ENCODE measurements at regions of chr1 and their contacts with region 1.

Region 1: DNA sequence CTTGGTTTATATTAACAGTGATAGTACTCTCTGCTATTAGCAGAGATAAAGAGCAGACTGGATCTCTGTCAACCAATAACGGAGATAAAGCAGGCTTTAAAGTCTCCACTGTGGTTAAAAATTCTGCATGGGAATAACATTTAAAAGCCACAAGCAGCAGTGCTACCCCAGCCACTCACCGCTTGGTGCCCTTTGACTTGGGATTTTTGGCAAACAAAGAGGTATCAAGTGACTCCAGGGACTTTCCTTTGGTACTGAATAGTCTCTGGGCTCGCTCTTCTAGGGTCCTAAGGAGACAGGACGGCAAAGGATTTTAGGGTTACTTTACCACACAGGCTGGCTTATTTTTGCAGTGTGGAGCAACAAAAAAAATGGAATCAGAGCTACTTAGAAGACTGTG is 11.3 kb downstream of the SF3A3 start:
- DNase-seq: no peak
- ATAC-seq: no peak
- H3K4me3 ChIP-seq: no peak overlapping the region
- H3K4me3 Mint-ChIP-seq: no peak overlapping the region
- H3K27ac ChIP-seq: no peak overlapping the region
- H3K27ac Mint-ChIP-seq: no peak overlapping the region
- H3K4me1 ChIP-seq: no peaks in the 10 kb centered on the region
- H3K4me1 Mint-ChIP-seq: no peaks in the 10 kb centered on the region
- H3K27me3 ChIP-seq: no peaks in the 10 kb centered on the region
- H3K27me3 Mint-ChIP-seq: no peaks in the 10 kb centered on the region
- CTCF ChIP-seq: no peak

Region 2: GRCh38 chr1:37704966-37705365 is 273.6 kb before region 1 on chr1:
- CTCF ChIA-PET with region 1: no interaction called
- POLR2A ChIA-PET with region 1: no interaction called
- intact Hi-C with region 1: loop called in 1 of 2 experiments (anchors 5 kb)
- DNase-seq: no peak
- ATAC-seq: no peak
- H3K4me3 ChIP-seq: no peak overlapping the region
- H3K4me3 Mint-ChIP-seq: no peak overlapping the region
- H3K27ac ChIP-seq: no peak overlapping the region
- H3K27ac Mint-ChIP-seq: no peak overlapping the region
- H3K4me1 ChIP-seq: no peaks in the 10 kb centered on the region
- H3K4me1 Mint-ChIP-seq: no peaks in the 10 kb centered on the region
- H3K27me3 ChIP-seq: no peaks in the 10 kb centered on the region
- H3K27me3 Mint-ChIP-seq: no peaks in the 10 kb centered on the region
- CTCF ChIP-seq: no peak

Region 3: GRCh38 chr1:37890378-37891014 is 88.0 kb before region 1 on chr1:
- CTCF ChIA-PET with region 1: no interaction called
- POLR2A ChIA-PET with region 1: no interaction called
- intact Hi-C with region 1: loop called (anchors 1 to 5 kb)
- DNase-seq: peak in 4 of 14 experiments; percentile 8 to 62 (median 58)
- ATAC-seq: peak; percentile 61
- H3K4me3 ChIP-seq: no peak overlapping the region
- H3K4me3 Mint-ChIP-seq: no peak overlapping the region
- H3K27ac ChIP-seq: no peak overlapping the region
- H3K27ac Mint-ChIP-seq: peak overlapping the region; percentile 66
- H3K4me1 ChIP-seq: no peaks in the 10 kb centered on the region
- H3K4me1 Mint-ChIP-seq: peaks cover 5% of the 10 kb centered on the region
- H3K27me3 ChIP-seq: no peaks in the 10 kb centered on the region
- H3K27me3 Mint-ChIP-seq: no peaks in the 10 kb centered on the region
- CTCF ChIP-seq: peak; percentile 68

Region 4: DNA sequence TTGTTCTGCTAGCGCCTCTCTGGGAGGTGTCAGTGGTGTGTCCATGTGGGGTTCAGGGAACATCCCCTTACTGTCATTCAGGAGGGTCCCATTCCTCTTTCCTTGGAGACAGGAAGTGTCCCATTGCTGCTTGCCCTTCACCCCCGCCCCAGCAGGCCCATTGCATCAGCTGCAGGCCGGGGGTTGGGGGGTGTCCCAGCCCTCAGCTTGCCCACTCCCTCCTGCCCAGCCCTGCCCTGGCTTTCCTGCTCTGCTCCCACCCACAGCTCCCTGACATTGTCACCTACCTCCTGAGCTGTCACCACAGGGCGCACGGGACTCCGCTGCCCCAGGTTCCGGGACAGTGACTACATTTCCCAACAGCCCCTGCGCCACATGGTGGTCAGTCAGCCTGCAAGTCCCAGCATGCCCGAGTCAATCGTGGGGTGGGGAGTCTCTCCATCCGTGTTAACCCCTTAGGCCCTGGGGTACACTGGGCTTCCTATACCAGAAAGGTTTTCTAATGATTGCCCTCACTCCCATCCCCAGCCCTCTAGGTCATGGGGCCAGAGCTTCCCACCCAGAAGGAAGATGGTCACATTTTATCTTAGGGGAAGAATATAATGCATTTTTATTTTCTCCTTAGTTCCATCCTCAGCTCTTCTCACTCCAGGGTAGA is 31.7 kb before region 1 on chr1 and contains the start of gene INPP5B:
- CTCF ChIA-PET with region 1: no interaction called
- POLR2A ChIA-PET with region 1: no interaction called
- intact Hi-C with region 1: no loop called
- DNase-seq: peak in 13 of 14 experiments; percentile 25 to 81 (median 51)
- ATAC-seq: peak; percentile 83
- H3K4me3 ChIP-seq: peak within 1 kb of the TSS; percentile 61
- H3K4me3 Mint-ChIP-seq: peak within 1 kb of the TSS; percentile 89
- H3K27ac ChIP-seq: peak within 1 kb of the TSS; percentile 15 to 19
- H3K27ac Mint-ChIP-seq: peak within 1 kb of the TSS; percentile 70
- H3K4me1 ChIP-seq: peaks cover 19% of the 10 kb centered on the region
- H3K4me1 Mint-ChIP-seq: peaks cover 16% of the 10 kb centered on the region
- H3K27me3 ChIP-seq: no peaks in the 10 kb centered on the region
- H3K27me3 Mint-ChIP-seq: no peaks in the 10 kb centered on the region
- CTCF ChIP-seq: no peak
- total RNA-seq, gene INPP5B: 11.7 to 12.7 TPM